ENCODE measurements at regions of chr14 and their contacts with region 1.

Region 1: GRCh38 chr14:55425091-55425490 is 13.5 kb upstream of the ATG14 start:
- DNase-seq: no peak
- H3K4me3 ChIP-seq: no peak overlapping the region
- H3K27ac ChIP-seq: no peak overlapping the region
- H3K4me1 ChIP-seq: peaks cover 32% of the 10 kb centered on the region
- H3K27me3 ChIP-seq: no peaks in the 10 kb centered on the region
- CTCF ChIP-seq: no peak

Region 2: DNA sequence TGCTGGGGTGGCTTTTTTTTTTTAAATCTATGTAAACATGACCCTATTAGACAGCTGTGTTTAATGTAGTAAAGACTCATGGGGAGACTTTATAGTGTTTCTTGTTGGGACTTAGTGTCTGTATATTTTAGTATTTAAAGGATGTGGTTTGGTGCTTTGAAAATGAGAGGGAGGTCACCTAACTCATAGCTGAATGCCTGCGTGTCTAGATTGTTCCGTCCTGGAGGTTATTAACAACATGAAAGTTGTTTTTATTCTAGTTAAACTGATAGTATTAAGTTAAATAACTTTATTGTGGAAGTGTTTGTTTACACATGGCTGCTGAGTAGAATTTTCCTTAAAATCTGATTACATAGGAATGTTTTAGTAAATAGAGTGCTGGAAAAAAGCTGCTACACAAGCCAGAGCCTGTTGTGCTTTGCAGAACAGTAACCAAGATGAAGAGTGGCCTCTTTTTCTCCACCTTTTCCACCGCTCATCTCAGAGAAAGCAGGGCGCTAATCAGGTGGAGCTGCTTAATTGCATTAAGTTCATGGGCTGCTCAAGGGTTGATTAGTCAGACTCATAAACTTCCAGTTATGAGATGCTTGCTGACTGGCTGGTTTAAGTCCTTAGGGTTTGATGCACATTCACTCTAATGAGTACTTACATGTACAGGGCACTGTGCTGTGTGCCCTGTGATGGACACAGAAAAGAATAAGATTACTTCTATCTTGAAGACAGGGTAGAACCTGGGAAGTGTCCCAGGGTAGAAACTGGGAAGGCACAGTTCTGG is 91.2 kb before region 1 on chr14:
- CTCF ChIA-PET with region 1: no interaction called
- POLR2A ChIA-PET with region 1: no interaction called
- intact Hi-C with region 1: no loop called
- DNase-seq: no peak
- H3K4me3 ChIP-seq: no peak overlapping the region
- H3K27ac ChIP-seq: no peak overlapping the region
- H3K4me1 ChIP-seq: peaks cover 36% of the 10 kb centered on the region
- H3K27me3 ChIP-seq: no peaks in the 10 kb centered on the region
- CTCF ChIP-seq: no peak

Region 3: GRCh38 chr14:55609681-55610080 is 184.6 kb after region 1 on chr14:
- CTCF ChIA-PET with region 1: no interaction called
- POLR2A ChIA-PET with region 1: interaction called, 10 read pairs
- intact Hi-C with region 1: no loop called
- DNase-seq: peak; percentile 7 to 49
- H3K4me3 ChIP-seq: no peak overlapping the region
- H3K27ac ChIP-seq: 0 out of 2 replicates have a peak overlapping the region, but pooled peaks have one; percentile 9
- H3K4me1 ChIP-seq: peaks cover 55% of the 10 kb centered on the region
- H3K27me3 ChIP-seq: no peaks in the 10 kb centered on the region
- CTCF ChIP-seq: no peak

Region 4: DNA sequence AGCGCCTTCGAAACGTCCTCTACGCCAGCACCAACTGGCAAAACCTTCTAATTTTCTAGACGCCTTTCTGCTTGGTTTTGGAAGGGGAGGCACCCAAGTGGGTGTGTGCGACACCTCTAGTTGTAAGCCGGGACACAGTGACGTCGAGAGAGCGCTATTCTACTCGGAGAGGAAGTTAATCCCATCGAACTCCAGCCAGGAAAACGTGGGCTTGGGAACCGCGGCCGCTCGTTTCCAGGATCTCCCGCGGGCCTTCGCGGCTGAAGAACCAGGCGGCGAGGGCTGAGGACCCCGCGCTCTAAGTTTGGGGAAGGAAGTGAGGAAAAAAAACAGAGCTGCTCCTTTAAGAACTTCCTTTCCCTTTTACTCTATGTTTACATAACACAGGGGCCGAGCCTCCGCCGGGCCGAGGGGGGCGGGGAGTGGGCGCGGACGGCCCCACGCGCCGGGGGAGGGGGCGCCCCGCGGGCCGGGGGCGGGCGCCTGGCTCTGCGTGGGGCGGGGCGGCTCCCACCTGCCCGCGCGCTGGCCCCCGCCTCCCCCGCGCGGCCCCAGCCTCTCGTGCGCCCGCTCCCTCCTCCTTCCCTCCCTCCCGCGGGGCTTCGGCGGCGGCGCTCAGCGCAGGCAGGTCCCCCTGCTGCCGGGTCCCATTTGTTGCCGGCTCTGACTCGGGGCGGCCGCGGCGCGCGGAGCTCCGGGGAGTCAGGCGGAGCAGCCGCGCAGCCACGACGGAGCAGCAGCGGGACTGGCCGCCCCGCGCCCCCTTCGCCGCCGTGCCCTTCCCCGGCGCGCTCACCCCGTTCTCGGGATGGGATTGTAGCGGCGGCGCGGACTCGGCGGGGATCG is 692.9 kb after region 1 on chr14 and contains the start of gene PELI2:
- CTCF ChIA-PET with region 1: no interaction called
- POLR2A ChIA-PET with region 1: no interaction called
- intact Hi-C with region 1: no loop called
- DNase-seq: peak; percentile 42 to 78
- H3K4me3 ChIP-seq: peak within 1 kb of the TSS; percentile 71
- H3K27ac ChIP-seq: no peak within 1 kb of the TSS
- H3K4me1 ChIP-seq: no peaks in the 10 kb centered on the region
- H3K27me3 ChIP-seq: peaks cover 30% of the 10 kb centered on the region
- CTCF ChIP-seq: no peak
- total RNA-seq, gene PELI2: 7.9 and 10.0 TPM in 2 replicates